ENCODE measurements at regions of chrX and their contacts with region 1.

Region 1: GRCh38 chrX:24133280-24133679 is 16.2 kb upstream of the ZFX start:
- DNase-seq: no peak
- H3K4me3 ChIP-seq: no peak overlapping the region
- H3K27ac ChIP-seq: no peak overlapping the region
- H3K4me1 ChIP-seq: no peaks in the 10 kb centered on the region
- H3K27me3 ChIP-seq: no peaks in the 10 kb centered on the region
- CTCF ChIP-seq: no peak

Region 2: DNA sequence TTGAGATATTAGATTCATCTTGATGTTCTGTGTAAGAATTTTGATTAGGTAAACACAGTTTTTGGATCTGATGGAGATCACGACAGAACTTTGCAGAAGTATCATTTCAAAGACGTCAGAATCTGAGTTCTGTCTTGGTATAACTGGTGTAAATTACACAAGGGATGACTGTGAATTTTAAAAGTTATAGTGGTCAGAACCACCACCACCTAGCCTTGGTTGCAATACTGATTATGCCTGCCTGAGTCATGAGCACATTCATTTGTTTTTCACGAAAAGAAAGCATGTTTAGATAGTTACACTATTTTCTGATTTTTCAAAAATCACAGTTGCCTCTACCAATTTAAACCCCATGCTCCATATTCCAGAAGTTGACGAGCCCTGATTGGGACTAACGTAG is 71.1 kb after region 1 on chrX:
- CTCF ChIA-PET with region 1: no interaction called
- dilution Hi-C with region 1: loop called (anchors 5 kb)
- in situ Hi-C with region 1: no loop called
- intact Hi-C with region 1: no loop called
- DNase-seq: peak; percentile 15
- H3K4me3 ChIP-seq: no peak overlapping the region
- H3K27ac ChIP-seq: no peak overlapping the region
- H3K4me1 ChIP-seq: no peaks in the 10 kb centered on the region
- H3K27me3 ChIP-seq: no peaks in the 10 kb centered on the region
- CTCF ChIP-seq: no peak